ENCODE measurements at regions of chr12 and their contacts with region 1.

Region 1: DNA sequence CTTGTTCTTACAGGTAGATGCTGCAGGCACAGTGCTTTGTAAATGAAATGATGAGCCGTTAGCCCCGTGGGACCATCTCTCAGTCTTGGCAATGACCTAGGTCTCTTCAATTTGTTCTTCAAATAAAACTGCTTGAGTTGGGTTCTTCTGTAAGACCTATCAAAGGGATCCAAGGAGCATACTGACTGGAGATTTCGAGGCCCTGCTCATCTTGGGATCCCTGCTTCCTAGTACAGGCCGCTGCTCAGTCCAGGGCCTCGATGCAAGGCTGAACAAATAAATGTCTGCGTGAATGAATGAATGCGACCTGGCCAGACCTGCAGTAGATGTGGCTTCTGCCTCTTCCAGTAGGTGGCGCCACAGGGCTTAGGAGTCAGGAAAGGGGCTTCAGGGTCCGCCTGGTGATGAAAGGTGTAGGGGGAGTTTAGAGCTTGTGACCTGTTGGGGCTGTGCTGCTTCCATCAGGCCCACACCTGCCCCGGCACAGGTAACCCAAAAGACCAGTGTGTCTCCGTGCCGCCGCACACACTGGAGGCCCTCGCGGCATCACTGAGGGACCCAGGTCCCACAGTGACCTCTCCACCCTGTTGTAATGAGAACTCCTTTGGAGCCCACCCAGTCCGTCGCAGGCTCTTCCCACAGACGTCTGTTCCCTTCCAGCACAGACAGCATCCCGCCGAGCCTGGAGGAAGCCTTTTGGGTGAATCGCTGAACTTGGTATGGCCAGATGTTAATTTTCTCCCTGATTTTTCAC is 4.4 kb downstream of the CACNA1C start:
- DNase-seq: no peak
- ATAC-seq: peak; percentile 67
- H3K4me3 ChIP-seq: no peak overlapping the region
- H3K27ac ChIP-seq: no peak overlapping the region
- H3K4me1 ChIP-seq: no peaks in the 10 kb centered on the region
- H3K27me3 ChIP-seq: peaks cover 9 to 14% of the 10 kb centered on the region in 2 experiments; a peak in 3 of 4 replicates
- CTCF ChIP-seq: peak; percentile 59 to 70 (median 61)
- EP300 ChIP-seq: no peak
- POLR2A ChIP-seq: no peak
- RAD21 ChIP-seq: peak; percentile 66

Region 2: GRCh38 chr12:2291182-2291832 is 234.1 kb after region 1 on chr12:
- CTCF ChIA-PET with region 1: interaction called, 14 read pairs
- POLR2A ChIA-PET with region 1: no interaction called
- RAD21 ChIA-PET with region 1: interaction called, 3 read pairs
- SMC1A ChIA-PET with region 1: interaction called, 3 read pairs
- in situ Hi-C with region 1: no loop called
- intact Hi-C with region 1: no loop called
- DNase-seq: no peak
- ATAC-seq: peak; percentile 90
- H3K4me3 ChIP-seq: no peak overlapping the region
- H3K27ac ChIP-seq: no peak overlapping the region
- H3K4me1 ChIP-seq: peaks cover 14% of the 10 kb centered on the region
- H3K27me3 ChIP-seq: no peaks in the 10 kb centered on the region
- CTCF ChIP-seq: peak; percentile 60 to 77 (median 73)
- EP300 ChIP-seq: no peak
- POLR2A ChIP-seq: no peak
- RAD21 ChIP-seq: peak; percentile 55